ENCODE measurements at regions of chr6 and their contacts with region 1.

Region 1: GRCh38 chr6:97497713-97498331 is 214.8 kb upstream of the MMS22L start:
- DNase-seq: peak; percentile 54
- H3K4me3 ChIP-seq: no peak overlapping the region
- H3K27ac ChIP-seq: no peak overlapping the region
- H3K4me1 ChIP-seq: no peaks in the 10 kb centered on the region
- H3K27me3 ChIP-seq: no peaks in the 10 kb centered on the region
- CTCF ChIP-seq: peak; percentile 81

Region 2: GRCh38 chr6:98845211-98846020 is 1347.6 kb after region 1 on chr6:
- intact Hi-C with region 1: loop called (anchors 5 kb)
- DNase-seq: peak; percentile 73
- H3K4me3 ChIP-seq: peak overlapping the region; percentile 20
- H3K27ac ChIP-seq: no peak overlapping the region
- H3K4me1 ChIP-seq: peaks cover 5% of the 10 kb centered on the region
- H3K27me3 ChIP-seq: peaks cover 72% of the 10 kb centered on the region
- CTCF ChIP-seq: peak; percentile 79

Region 3: GRCh38 chr6:99119109-99120031 is 1621.5 kb after region 1 on chr6:
- intact Hi-C with region 1: loop called (anchors 5 kb)
- DNase-seq: peak; percentile 33
- H3K4me3 ChIP-seq: no peak overlapping the region
- H3K27ac ChIP-seq: no peak overlapping the region
- H3K4me1 ChIP-seq: no peaks in the 10 kb centered on the region
- H3K27me3 ChIP-seq: no peaks in the 10 kb centered on the region
- CTCF ChIP-seq: peak; percentile 51

Measured in colonic mucosa (tissue), 4 donors.